ENCODE measurements at regions of chr2 and their contacts with region 1.

Region 1: GRCh38 chr2:111667542-111668273 is 216.3 kb downstream of the ANAPC1 start:
- DNase-seq: peak; percentile 7
- H3K4me3 Mint-ChIP-seq: no peak overlapping the region
- H3K27ac Mint-ChIP-seq: no peak overlapping the region
- H3K4me1 Mint-ChIP-seq: peaks cover 8% of the 10 kb centered on the region
- H3K27me3 Mint-ChIP-seq: peaks cover 22% of the 10 kb centered on the region

Region 2: GRCh38 chr2:111698743-111699554 is 31.2 kb after region 1 on chr2:
- intact Hi-C with region 1: loop called (anchors 5 kb)
- DNase-seq: peak; percentile 60
- H3K4me3 Mint-ChIP-seq: peak overlapping the region; percentile 35
- H3K27ac Mint-ChIP-seq: peak overlapping the region; percentile 87
- H3K4me1 Mint-ChIP-seq: peaks cover 43% of the 10 kb centered on the region
- H3K27me3 Mint-ChIP-seq: peaks cover 14% of the 10 kb centered on the region

Region 3: DNA sequence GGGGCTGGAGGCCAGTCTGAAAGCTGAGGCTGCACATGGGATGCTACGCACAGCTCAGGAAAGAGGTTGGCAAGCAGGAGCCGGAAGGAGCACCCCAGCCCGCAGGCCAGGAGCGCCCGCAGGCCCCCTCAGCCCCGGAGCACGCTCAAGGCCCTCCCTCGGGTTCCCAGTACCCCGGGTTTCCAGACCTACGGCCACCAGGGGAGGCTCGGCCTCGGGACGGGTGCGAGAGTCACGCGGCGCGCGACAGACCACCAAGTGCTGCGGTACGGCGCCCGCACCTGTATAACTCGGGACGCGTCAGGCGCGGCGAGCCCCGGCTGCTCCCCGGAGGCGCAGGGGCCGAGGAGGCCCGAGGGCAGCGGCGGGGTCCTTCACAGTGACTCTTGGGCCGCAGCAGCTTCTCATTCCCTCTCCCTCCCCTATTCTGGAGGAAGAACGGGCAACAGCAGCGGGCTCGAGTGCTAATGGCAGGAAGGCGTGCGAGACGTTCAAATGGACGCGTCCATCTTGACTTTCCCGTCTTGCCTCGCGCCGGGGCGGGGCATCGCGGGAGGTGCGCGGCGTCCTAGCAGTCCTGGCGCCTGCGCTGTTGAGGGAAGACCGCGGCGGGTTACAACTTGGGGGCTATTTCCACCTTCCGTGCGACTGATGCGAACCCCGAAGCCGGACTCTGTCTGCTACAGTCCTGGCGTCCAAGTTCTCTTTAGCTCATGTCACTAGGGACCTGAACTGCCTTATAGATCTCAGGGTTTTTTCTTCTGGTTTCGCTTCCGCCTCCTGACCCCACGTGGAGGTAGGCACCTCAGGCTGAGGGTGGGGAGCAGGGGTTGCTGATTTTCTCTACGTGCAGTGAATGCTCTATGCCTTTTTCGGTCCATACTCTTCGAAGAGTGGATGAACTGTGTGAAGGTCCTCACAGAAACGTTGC is 216.2 kb after region 1 on chr2 and contains the start of gene ANAPC1:
- intact Hi-C with region 1: no loop called
- DNase-seq: peak; percentile 84
- H3K4me3 Mint-ChIP-seq: peak within 1 kb of the TSS; percentile 93
- H3K27ac Mint-ChIP-seq: peak within 1 kb of the TSS; percentile 90
- H3K4me1 Mint-ChIP-seq: peaks cover 7% of the 10 kb centered on the region
- H3K27me3 Mint-ChIP-seq: no peaks in the 10 kb centered on the region
- total RNA-seq, gene ANAPC1: 115 and 121 TPM in 2 replicates

Region 4: GRCh38 chr2:112065966-112066365 is 398.3 kb after region 1 on chr2:
- intact Hi-C with region 1: no loop called
- DNase-seq: no peak
- H3K4me3 Mint-ChIP-seq: no peak overlapping the region
- H3K27ac Mint-ChIP-seq: peak overlapping the region; percentile 63
- H3K4me1 Mint-ChIP-seq: peaks cover 32% of the 10 kb centered on the region
- H3K27me3 Mint-ChIP-seq: no peaks in the 10 kb centered on the region

Measured in activated T-helper 2 cell treated with anti-CD3 and anti-CD28 coated beads, Interferon-gamma antibody, Interleukin-2, Interleukin-4, amounts not matched to agents 10 μg/mL and 5 μg/mL and 100 μg/mL, durations not matched to agents 14 hours and 24 hours and 36 hours (primary cell).